ENCODE measurements at regions of chr4 and their contacts with region 1.

Region 1: GRCh38 chr4:112031712-112032328 is 113.4 kb upstream of the FAM241A start:
- DNase-seq: peak; percentile 50
- ATAC-seq: peak; percentile 89
- H3K4me3 ChIP-seq: no peak overlapping the region
- H3K27ac ChIP-seq: no peak overlapping the region
- H3K4me1 ChIP-seq: no peaks in the 10 kb centered on the region
- H3K27me3 ChIP-seq: peaks cover 2% of the 10 kb centered on the region; the same call in 1 of the 2 replicates
- CTCF ChIP-seq: peak; percentile 69
- POLR2A ChIP-seq: no peak
- RAD21 ChIP-seq: peak; percentile 71

Region 2: GRCh38 chr4:111143510-111143909 is 888.3 kb before region 1 on chr4:
- CTCF ChIA-PET with region 1: no interaction called
- POLR2A ChIA-PET with region 1: no interaction called
- dilution Hi-C with region 1: no loop called
- in situ Hi-C with region 1: no loop called
- intact Hi-C with region 1: loop called (anchors 10 kb)
- DNase-seq: no peak
- ATAC-seq: no peak
- H3K4me3 ChIP-seq: no peak overlapping the region
- H3K27ac ChIP-seq: no peak overlapping the region
- H3K4me1 ChIP-seq: no peaks in the 10 kb centered on the region
- H3K27me3 ChIP-seq: no peaks in the 10 kb centered on the region
- CTCF ChIP-seq: no peak
- POLR2A ChIP-seq: no peak
- RAD21 ChIP-seq: no peak

Region 3: DNA sequence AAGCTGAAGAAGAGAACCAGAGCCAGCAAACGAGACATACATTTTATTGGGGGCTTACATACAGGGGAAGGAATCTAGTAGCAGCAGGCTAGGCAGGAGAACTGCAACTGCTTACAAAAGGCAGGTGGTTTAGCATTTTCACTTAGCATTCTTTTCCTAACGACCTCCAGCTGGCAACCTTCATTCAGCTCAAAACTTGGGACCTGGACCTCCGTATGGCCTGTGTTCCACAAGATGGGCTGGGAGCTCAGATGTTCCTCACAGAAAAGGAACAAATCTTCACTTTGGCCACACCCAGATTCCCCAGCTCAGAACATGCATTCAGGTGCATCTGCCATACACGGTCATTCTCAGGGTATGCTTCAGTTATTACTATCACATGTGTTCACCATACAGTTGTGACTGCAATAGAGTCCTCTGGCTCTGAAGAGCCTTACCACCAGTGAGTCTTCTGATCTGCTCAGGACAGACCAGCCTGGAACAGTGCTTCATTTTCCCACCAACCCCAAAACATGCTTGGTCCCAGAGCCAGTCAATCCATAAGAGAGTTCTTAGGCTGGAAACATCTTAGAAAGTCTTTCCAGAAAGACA is 170.2 kb after region 1 on chr4:
- CTCF ChIA-PET with region 1: no interaction called
- POLR2A ChIA-PET with region 1: no interaction called
- dilution Hi-C with region 1: no loop called
- in situ Hi-C with region 1: no loop called
- intact Hi-C with region 1: no loop called
- DNase-seq: no peak
- ATAC-seq: no peak
- H3K4me3 ChIP-seq: no peak overlapping the region
- H3K27ac ChIP-seq: no peak overlapping the region
- H3K4me1 ChIP-seq: no peaks in the 10 kb centered on the region
- H3K27me3 ChIP-seq: peaks cover 2% of the 10 kb centered on the region; the same call in 1 of the 2 replicates
- CTCF ChIP-seq: no peak
- POLR2A ChIP-seq: no peak
- RAD21 ChIP-seq: no peak

Region 4: GRCh38 chr4:112370466-112370865 is 338.6 kb after region 1 on chr4:
- CTCF ChIA-PET with region 1: no interaction called
- POLR2A ChIA-PET with region 1: no interaction called
- dilution Hi-C with region 1: no loop called
- in situ Hi-C with region 1: no loop called
- intact Hi-C with region 1: no loop called
- DNase-seq: peak; percentile 8
- ATAC-seq: no peak
- H3K4me3 ChIP-seq: no peak overlapping the region
- H3K27ac ChIP-seq: no peak overlapping the region
- H3K4me1 ChIP-seq: no peaks in the 10 kb centered on the region
- H3K27me3 ChIP-seq: no peaks in the 10 kb centered on the region
- CTCF ChIP-seq: no peak
- POLR2A ChIP-seq: no peak
- RAD21 ChIP-seq: no peak